ENCODE measurements at regions of chr13 and their contacts with region 1.

Region 1: DNA sequence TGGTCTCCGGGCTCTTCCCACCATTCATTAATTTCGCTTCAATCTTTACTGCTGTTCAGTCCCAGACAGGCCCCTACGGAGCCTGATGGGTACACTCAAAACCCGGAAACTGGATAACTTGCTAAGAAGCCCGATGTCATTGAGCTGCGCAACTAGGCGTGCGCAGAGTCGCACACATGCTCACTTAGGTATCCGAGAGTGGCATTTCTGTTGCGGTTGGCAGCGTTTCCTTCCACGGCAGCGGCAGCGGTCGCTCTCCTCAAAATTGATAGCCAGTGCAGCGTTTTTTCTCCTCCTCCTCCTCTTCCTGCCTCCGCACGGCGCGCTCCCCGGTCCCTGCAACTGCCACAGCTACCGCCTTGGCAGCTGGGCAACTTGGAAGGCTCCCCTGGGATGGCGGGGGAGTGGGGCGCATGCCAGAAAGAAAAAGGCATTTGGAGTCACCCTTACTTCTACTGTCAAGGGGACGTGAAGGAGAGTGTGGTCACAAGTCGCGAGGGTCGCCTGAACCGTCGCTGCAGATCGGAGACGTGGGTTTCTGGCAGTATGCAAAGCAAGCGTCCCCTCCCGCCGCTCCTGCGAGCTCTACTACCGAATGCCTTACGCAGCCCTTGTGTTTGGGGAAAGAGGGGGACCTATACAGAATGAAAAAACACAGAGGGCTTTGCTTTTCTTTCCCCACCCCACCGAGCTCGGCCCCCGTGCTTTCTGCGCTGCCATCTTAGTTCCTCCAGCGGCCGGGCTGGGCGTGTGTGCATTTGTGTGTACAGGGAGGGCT is 2.4 kb upstream of the MYCBP2 start:
- DNase-seq: peak; percentile 76 to 93 (median 87)
- H3K4me3 ChIP-seq: peak overlapping the region; percentile 65 to 95 (median 81)
- H3K27ac ChIP-seq: peak overlapping the region; percentile 69 to 99 (median 94)
- H3K27me3 ChIP-seq: no peaks in the 10 kb centered on the region
- CTCF ChIP-seq: peak in 28 of 56 donors; percentile 2 to 49 (median 17)

Region 2: GRCh38 chr13:77026818-77027585 is 302.3 kb before region 1 on chr13 and contains the start of gene FBXL3:
- intact Hi-C with region 1: loop called (anchors 2 to 5 kb)
- DNase-seq: peak; percentile 70 to 87 (median 84)
- H3K4me3 ChIP-seq: peak within 1 kb of the TSS; percentile 80 to 99 (median 91)
- H3K27ac ChIP-seq: peak within 1 kb of the TSS; percentile 84 to 100 (median 99)
- H3K27me3 ChIP-seq: no peaks in the 10 kb centered on the region
- CTCF ChIP-seq: peak in 18 of 56 donors; percentile 5 to 51 (median 12)
- total RNA-seq, gene FBXL3: 48.6 to 79.1 (median 59.0) TPM

Region 3: DNA sequence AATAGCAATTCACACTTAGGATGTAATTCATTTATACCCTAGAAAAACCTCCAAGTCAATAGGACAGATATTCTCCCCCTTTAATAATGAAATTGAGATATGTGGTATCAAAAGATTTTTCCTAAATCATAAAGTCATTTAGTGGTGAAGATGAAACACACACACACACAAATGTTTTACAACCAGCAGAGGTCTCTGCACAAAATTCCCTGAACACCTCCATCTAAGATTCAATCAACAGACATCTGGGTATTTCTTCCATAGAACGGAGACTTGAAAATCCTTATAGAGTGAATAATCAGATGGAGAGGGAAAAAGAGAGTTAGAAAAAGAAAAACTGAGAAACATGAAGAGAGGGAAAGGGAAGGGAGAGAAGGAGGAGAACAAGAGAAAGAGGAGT is 55.2 kb before region 1 on chr13:
- intact Hi-C with region 1: loop called in 1 of 2 experiments (anchors 10 kb)
- DNase-seq: no peak
- H3K4me3 ChIP-seq: no peak overlapping the region
- H3K27ac ChIP-seq: no peak overlapping the region
- H3K27me3 ChIP-seq: no peaks in the 10 kb centered on the region
- CTCF ChIP-seq: peak in 16 of 56 donors; percentile 11 to 45 (median 22)

Region 4: GRCh38 chr13:77389625-77390000 is 60.3 kb after region 1 on chr13:
- intact Hi-C with region 1: loop called in 1 of 2 experiments (anchors 1 kb)
- DNase-seq: no peak
- H3K4me3 ChIP-seq: no peak overlapping the region
- H3K27ac ChIP-seq: peak overlapping the region in 6 of 59 donors; percentile 8 to 55 (median 36)
- H3K27me3 ChIP-seq: no peaks in the 10 kb centered on the region
- CTCF ChIP-seq: no peak

Region 5: GRCh38 chr13:77460195-77460594 is 130.9 kb after region 1 on chr13:
- intact Hi-C with region 1: no loop called
- DNase-seq: no peak
- H3K4me3 ChIP-seq: no peak overlapping the region
- H3K27ac ChIP-seq: no peak overlapping the region
- H3K27me3 ChIP-seq: no peaks in the 10 kb centered on the region
- CTCF ChIP-seq: no peak

Region 6: DNA sequence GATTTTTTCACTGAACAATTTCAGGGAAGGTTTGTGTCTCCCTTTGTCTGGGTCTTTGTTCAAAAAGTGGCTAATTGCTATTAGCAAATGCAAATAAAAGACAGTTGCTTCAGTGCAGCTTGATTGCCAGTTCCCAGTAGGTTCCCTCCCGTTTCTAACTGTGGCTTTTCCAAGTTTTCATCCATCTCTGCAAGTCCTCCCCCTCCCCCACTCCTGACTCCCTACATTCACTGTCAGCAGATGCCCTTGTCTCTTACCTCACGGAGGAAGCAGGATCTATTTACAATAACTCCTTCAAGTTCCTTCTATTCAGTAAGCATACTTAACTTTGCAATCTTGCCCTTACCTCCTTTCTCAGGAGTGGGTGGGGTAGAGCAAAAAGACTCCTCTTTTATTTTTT is 150.7 kb after region 1 on chr13:
- intact Hi-C with region 1: loop called (anchors 1 to 2 kb)
- DNase-seq: no peak
- H3K4me3 ChIP-seq: no peak overlapping the region
- H3K27ac ChIP-seq: peak overlapping the region in 1 of 59 donors; percentile 28
- H3K27me3 ChIP-seq: no peaks in the 10 kb centered on the region
- CTCF ChIP-seq: no peak

Region 7: GRCh38 chr13:77584106-77584505 is 254.8 kb after region 1 on chr13:
- intact Hi-C with region 1: loop called in 1 of 2 experiments (anchors 10 kb)
- DNase-seq: peak; percentile 72 to 95 (median 86)
- H3K4me3 ChIP-seq: peak overlapping the region in 54 of 59 donors; percentile 4 to 64 (median 43)
- H3K27ac ChIP-seq: peak overlapping the region; percentile 72 to 99 (median 93)
- H3K27me3 ChIP-seq: no peaks in the 10 kb centered on the region
- CTCF ChIP-seq: no peak

Region 8: GRCh38 chr13:77697217-77698103 is 368.1 kb after region 1 on chr13 and contains the start of gene SLAIN1:
- intact Hi-C with region 1: loop called in 1 of 2 experiments (anchors 5 kb)
- DNase-seq: peak; percentile 78 to 96 (median 90)
- H3K4me3 ChIP-seq: peak within 1 kb of the TSS; percentile 59 to 97 (median 85)
- H3K27ac ChIP-seq: peak within 1 kb of the TSS; percentile 19 to 97 (median 94)
- H3K27me3 ChIP-seq: no peaks in the 10 kb centered on the region
- CTCF ChIP-seq: peak in 21 of 56 donors; percentile 4 to 46 (median 23)
- total RNA-seq, gene SLAIN1: 103 to 777 (median 227) TPM